B cell (primary cell): ENCODE measurements at regions of chr9 and their contacts with region 1.

Region 1: GRCh38 chr9:136482793-136483588 is at the start of gene SEC16A:
- DNase-seq: peak; percentile 99
- ATAC-seq: peak; percentile 75
- H3K4me3 ChIP-seq: peak within 1 kb of the TSS; percentile 63 to 96 (median 83)
- H3K4me3 Mint-ChIP-seq: peak within 1 kb of the TSS; percentile 97
- H3K27ac ChIP-seq: peak within 1 kb of the TSS; percentile 98 to 99
- H3K27ac Mint-ChIP-seq: peak within 1 kb of the TSS; percentile 99
- H3K4me1 ChIP-seq: peaks cover 25 to 26% of the 10 kb centered on the region in 2 donors
- H3K4me1 Mint-ChIP-seq: peaks cover 34% of the 10 kb centered on the region
- H3K27me3 ChIP-seq: peaks cover 0 to 4% (median 2%) of the 10 kb centered on the region in 4 experiments
- H3K27me3 Mint-ChIP-seq: no peaks in the 10 kb centered on the region
- CTCF ChIP-seq: no peak
- total RNA-seq, gene SEC16A: 73.4 and 79.5 TPM in 2 replicates

Region 2: GRCh38 chr9:135907431-135908092 is 575.4 kb before region 1 on chr9 and contains the start of gene CAMSAP1:
- CTCF ChIA-PET with region 1: no interaction called
- POLR2A ChIA-PET with region 1: no interaction called
- intact Hi-C with region 1: loop called (anchors 2 kb)
- DNase-seq: peak; percentile 97
- ATAC-seq: peak; percentile 88
- H3K4me3 ChIP-seq: peak within 1 kb of the TSS; percentile 38 to 85 (median 84)
- H3K4me3 Mint-ChIP-seq: peak within 1 kb of the TSS; percentile 93
- H3K27ac ChIP-seq: peak within 1 kb of the TSS; percentile 44 to 74
- H3K27ac Mint-ChIP-seq: peak within 1 kb of the TSS; percentile 80
- H3K4me1 ChIP-seq: peaks cover 20 to 23% of the 10 kb centered on the region in 2 donors
- H3K4me1 Mint-ChIP-seq: peaks cover 43% of the 10 kb centered on the region
- H3K27me3 ChIP-seq: no peaks in the 10 kb centered on the region
- H3K27me3 Mint-ChIP-seq: no peaks in the 10 kb centered on the region
- CTCF ChIP-seq: no peak
- total RNA-seq, gene CAMSAP1: 31.0 and 31.6 TPM in 2 replicates

Region 3: DNA sequence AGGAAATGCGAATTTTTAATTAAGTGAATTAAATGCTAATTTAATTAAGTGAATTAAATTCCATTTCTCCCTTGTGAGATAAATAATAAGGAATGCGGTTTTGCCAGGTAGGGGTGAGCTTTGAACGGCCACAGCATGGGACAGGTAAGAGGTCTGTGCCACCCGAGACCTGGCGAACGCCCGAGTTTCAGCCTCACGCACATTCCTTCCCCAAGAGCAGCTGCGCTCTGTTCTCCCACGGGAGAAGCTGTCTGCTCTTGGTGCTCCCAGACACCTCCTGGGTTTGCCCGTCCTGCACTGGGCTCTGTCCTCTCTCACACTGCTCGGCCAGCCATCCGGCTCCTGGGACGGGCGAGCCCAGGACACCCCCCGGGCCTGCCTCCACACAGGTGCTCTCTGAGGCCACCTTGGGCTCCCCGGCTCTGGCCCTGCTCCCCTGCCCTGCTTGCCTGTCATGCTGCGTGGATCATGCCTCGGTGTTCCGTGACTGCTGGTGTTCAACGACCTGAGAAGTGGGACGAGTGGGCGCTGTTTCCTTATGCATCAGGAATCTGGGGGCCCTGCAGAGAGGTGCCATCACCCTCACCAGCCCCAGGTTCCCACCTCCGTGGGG is 561.9 kb before region 1 on chr9:
- CTCF ChIA-PET with region 1: no interaction called
- POLR2A ChIA-PET with region 1: no interaction called
- intact Hi-C with region 1: no loop called
- DNase-seq: no peak
- ATAC-seq: no peak
- H3K4me3 ChIP-seq: no peak overlapping the region
- H3K4me3 Mint-ChIP-seq: no peak overlapping the region
- H3K27ac ChIP-seq: no peak overlapping the region
- H3K27ac Mint-ChIP-seq: no peak overlapping the region
- H3K4me1 ChIP-seq: peaks cover 5 to 9% of the 10 kb centered on the region in 2 donors
- H3K4me1 Mint-ChIP-seq: peaks cover 12% of the 10 kb centered on the region
- H3K27me3 ChIP-seq: no peaks in the 10 kb centered on the region
- H3K27me3 Mint-ChIP-seq: no peaks in the 10 kb centered on the region
- CTCF ChIP-seq: no peak

Region 4: DNA sequence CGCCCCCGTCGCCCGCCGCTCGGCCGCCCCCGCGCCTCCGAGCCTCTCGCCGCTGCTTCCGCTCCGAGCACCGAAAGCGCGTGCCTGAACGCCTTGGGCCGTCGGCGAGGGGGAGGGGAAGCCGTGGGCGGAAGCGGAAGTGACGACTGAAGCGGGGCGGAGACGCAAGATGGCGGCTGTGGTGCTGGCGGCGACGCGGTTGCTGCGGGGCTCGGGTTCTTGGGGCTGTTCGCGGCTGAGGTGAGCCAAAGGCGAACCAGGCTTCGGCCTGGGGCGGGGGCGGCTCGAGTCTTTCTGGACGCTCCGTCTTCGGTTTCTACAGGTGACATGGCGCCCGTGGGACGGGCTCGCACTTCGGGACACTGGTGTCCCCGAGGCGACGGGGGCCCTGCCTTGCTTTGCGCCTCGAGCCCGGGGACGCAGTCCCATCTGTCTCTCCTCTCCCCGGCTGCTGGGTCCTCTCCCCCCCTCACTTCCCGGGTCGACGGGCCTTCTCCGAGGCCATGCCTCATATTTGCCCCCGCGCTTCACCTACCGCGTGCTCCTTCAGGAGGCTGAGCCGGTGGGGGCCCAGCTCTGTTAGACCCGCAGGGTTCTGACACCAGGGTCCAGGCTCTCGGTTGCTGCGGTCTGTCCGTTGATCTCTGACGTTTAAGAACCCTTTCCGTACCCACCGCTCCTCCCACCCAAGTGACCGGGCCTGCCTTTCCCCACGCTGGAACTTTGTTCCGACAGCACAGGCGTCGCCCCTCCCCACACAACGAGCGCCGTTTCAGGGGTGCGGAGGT is 72.3 kb before region 1 on chr9 and contains the starts of genes ENTR1 and PMPCA:
- CTCF ChIA-PET with region 1: no interaction called
- POLR2A ChIA-PET with region 1: no interaction called
- intact Hi-C with region 1: loop called (anchors 1 kb)
- DNase-seq: peak; percentile 95
- ATAC-seq: peak; percentile 88
- H3K4me3 ChIP-seq: peak within 1 kb of the TSS; percentile 46 to 96 (median 81)
- H3K4me3 Mint-ChIP-seq: peak within 1 kb of the TSS; percentile 92
- H3K27ac ChIP-seq: peak within 1 kb of the TSS; percentile 80 to 91
- H3K27ac Mint-ChIP-seq: peak within 1 kb of the TSS; percentile 92
- H3K4me1 ChIP-seq: peaks cover 25 to 34% of the 10 kb centered on the region in 2 donors
- H3K4me1 Mint-ChIP-seq: peaks cover 37% of the 10 kb centered on the region
- H3K27me3 ChIP-seq: no peaks in the 10 kb centered on the region
- H3K27me3 Mint-ChIP-seq: no peaks in the 10 kb centered on the region
- CTCF ChIP-seq: no peak
- total RNA-seq, gene ENTR1: 86.3 and 94.7 TPM in 2 replicates
- total RNA-seq, gene PMPCA: 64.6 and 72.2 TPM in 2 replicates

Region 5: GRCh38 chr9:136539427-136540421 is 56.7 kb after region 1 on chr9:
- CTCF ChIA-PET with region 1: interaction called, 23 read pairs
- POLR2A ChIA-PET with region 1: interaction called, 3 read pairs
- intact Hi-C with region 1: no loop called
- DNase-seq: peak; percentile 85
- ATAC-seq: peak; percentile 69
- H3K4me3 ChIP-seq: peak overlapping the region in 4 of 5 experiments; percentile 7 to 48 (median 26)
- H3K4me3 Mint-ChIP-seq: peak overlapping the region; percentile 83
- H3K27ac ChIP-seq: peak overlapping the region; percentile 57 to 80
- H3K27ac Mint-ChIP-seq: peak overlapping the region; percentile 89
- H3K4me1 ChIP-seq: peaks cover 63 to 75% of the 10 kb centered on the region in 2 donors
- H3K4me1 Mint-ChIP-seq: peaks cover 73% of the 10 kb centered on the region
- H3K27me3 ChIP-seq: no peaks in the 10 kb centered on the region
- H3K27me3 Mint-ChIP-seq: no peaks in the 10 kb centered on the region
- CTCF ChIP-seq: no peak

Region 6: DNA sequence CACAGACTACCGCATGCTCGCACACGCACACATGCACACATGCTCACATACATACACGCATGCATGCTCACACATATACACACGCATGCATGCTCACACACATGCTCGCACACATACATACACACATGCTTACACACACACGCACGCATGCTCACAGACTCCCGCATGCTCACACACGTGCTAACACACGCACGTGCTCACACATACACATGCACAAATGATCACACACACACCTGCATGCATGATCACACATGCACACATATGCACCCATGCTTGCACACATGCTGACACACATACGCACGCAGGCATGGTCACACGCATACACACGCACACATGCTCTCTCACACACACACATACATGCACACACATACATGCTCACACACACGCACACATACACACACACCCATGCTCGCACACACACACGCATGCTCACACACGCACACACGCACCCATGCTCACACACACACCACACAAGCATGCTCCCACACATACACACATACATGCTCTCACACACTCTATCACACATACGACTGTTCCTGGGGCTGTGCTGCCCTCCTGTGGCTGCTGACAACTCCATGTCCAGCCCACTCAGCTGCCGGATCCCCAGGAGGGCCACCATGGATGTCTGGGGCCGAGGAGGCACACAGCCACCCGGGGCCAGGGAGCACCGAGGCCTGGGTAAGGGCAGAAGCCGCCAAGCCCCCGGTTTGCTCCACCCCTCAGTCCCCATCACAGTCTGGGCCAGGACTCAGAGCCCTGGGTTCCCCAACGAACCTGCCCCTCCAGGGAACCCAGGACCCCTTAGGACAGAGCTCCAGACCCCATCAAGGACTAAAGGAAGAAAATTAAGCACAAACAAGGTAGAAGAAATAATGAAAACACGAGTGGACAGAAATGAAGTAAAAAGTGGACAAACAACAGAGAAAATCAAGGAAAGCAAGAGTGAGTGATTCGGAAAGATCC is 148.3 kb after region 1 on chr9:
- CTCF ChIA-PET with region 1: interaction called, 153 read pairs
- POLR2A ChIA-PET with region 1: no interaction called
- intact Hi-C with region 1: no loop called
- DNase-seq: peak; percentile 88
- ATAC-seq: peak; percentile 87
- H3K4me3 ChIP-seq: no peak overlapping the region
- H3K4me3 Mint-ChIP-seq: no peak overlapping the region
- H3K27ac ChIP-seq: no peak overlapping the region
- H3K27ac Mint-ChIP-seq: no peak overlapping the region
- H3K4me1 ChIP-seq: peaks cover 11 to 21% of the 10 kb centered on the region in 2 donors
- H3K4me1 Mint-ChIP-seq: no peaks in the 10 kb centered on the region
- H3K27me3 ChIP-seq: peaks cover 0 to 25% (median 3%) of the 10 kb centered on the region in 4 experiments
- H3K27me3 Mint-ChIP-seq: peaks cover 10% of the 10 kb centered on the region
- CTCF ChIP-seq: peak; percentile 85

Region 7: GRCh38 chr9:136991993-136992818 is 509.2 kb after region 1 on chr9 and contains the start of gene PAXX:
- CTCF ChIA-PET with region 1: no interaction called
- POLR2A ChIA-PET with region 1: no interaction called
- intact Hi-C with region 1: loop called (anchors 5 kb)
- DNase-seq: peak; percentile 92
- ATAC-seq: peak; percentile 91
- H3K4me3 ChIP-seq: peak within 1 kb of the TSS; percentile 32 to 71 (median 66)
- H3K4me3 Mint-ChIP-seq: peak within 1 kb of the TSS; percentile 91
- H3K27ac ChIP-seq: peak within 1 kb of the TSS; percentile 76 to 97
- H3K27ac Mint-ChIP-seq: peak within 1 kb of the TSS; percentile 91
- H3K4me1 ChIP-seq: peaks cover 27 to 38% of the 10 kb centered on the region in 2 donors
- H3K4me1 Mint-ChIP-seq: peaks cover 26% of the 10 kb centered on the region
- H3K27me3 ChIP-seq: peaks cover 0 to 3% (median 0%) of the 10 kb centered on the region in 4 experiments
- H3K27me3 Mint-ChIP-seq: peaks cover 6% of the 10 kb centered on the region
- CTCF ChIP-seq: no peak
- total RNA-seq, gene PAXX: 73.0 and 74.8 TPM in 2 replicates